Activated naive CD4-positive, alpha-beta T cell treated with anti-CD3 and anti-CD28 coated beads, Interleukin-2, amount 10 ng/mL, durations not matched to agents 7 days and 5 days (primary cell): ENCODE measurements at regions of chr17 and their contacts with region 1.

Region 1: DNA sequence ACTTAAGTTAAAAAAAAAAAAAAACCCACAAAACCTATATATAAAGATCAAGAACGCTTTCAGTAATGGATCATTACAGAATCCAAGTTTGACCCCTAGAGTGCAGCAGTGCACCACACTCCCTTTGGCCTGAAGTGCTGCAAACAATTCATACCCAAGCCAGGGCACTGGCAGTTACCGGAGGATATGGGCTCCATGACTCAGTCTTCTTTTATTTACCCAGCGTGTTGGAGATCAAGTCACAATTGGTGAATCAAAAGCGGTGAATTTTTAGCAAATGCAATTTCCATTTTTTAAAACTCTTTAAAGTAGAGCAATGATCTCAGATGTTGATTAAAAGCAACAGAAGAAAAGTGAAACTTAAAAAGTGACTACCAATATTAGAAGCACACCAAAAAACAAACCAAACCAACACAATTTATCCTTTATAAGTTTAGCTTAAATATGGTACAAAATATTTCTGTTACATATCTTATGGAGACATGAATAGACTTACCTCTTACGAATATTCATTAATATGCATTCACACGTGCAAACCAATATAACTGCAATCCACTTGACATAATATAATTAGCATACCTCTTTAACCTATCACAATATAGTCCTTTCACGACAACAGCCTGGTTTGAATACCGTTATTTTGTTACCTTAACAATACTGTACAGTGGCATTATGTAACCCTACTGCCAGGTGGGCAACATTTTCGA is 46.3 kb downstream of the ZNF652 start:
- DNase-seq: peak; percentile 87
- H3K4me3 Mint-ChIP-seq: peak overlapping the region; percentile 35
- H3K27ac Mint-ChIP-seq: peak overlapping the region; percentile 82
- H3K4me1 Mint-ChIP-seq: peaks cover 29% of the 10 kb centered on the region
- H3K27me3 Mint-ChIP-seq: no peaks in the 10 kb centered on the region

Region 2: GRCh38 chr17:49297141-49297540 is 18.6 kb before region 1 on chr17:
- CTCF ChIA-PET with region 1: no interaction called
- DNase-seq: no peak
- H3K4me3 Mint-ChIP-seq: no peak overlapping the region
- H3K27ac Mint-ChIP-seq: no peak overlapping the region
- H3K4me1 Mint-ChIP-seq: no peaks in the 10 kb centered on the region
- H3K27me3 Mint-ChIP-seq: no peaks in the 10 kb centered on the region

Region 3: GRCh38 chr17:49361902-49362722 is 46.4 kb after region 1 on chr17 and contains the start of gene ZNF652:
- CTCF ChIA-PET with region 1: interaction called, 104 read pairs
- DNase-seq: peak; percentile 97
- H3K4me3 Mint-ChIP-seq: peak within 1 kb of the TSS; percentile 94
- H3K27ac Mint-ChIP-seq: peak within 1 kb of the TSS; percentile 98
- H3K4me1 Mint-ChIP-seq: peaks cover 66% of the 10 kb centered on the region
- H3K27me3 Mint-ChIP-seq: peaks cover 3% of the 10 kb centered on the region

Region 4: GRCh38 chr17:49375544-49375943 is 59.8 kb after region 1 on chr17:
- CTCF ChIA-PET with region 1: interaction called, 104 read pairs
- DNase-seq: no peak
- H3K4me3 Mint-ChIP-seq: no peak overlapping the region
- H3K27ac Mint-ChIP-seq: no peak overlapping the region
- H3K4me1 Mint-ChIP-seq: peaks cover 8% of the 10 kb centered on the region
- H3K27me3 Mint-ChIP-seq: peaks cover 37% of the 10 kb centered on the region

Region 5: GRCh38 chr17:49390548-49391324 is 75.0 kb after region 1 on chr17:
- CTCF ChIA-PET with region 1: interaction called, 98 read pairs
- DNase-seq: peak; percentile 34
- H3K4me3 Mint-ChIP-seq: peak overlapping the region; percentile 25
- H3K27ac Mint-ChIP-seq: peak overlapping the region; percentile 90
- H3K4me1 Mint-ChIP-seq: peaks cover 73% of the 10 kb centered on the region
- H3K27me3 Mint-ChIP-seq: peaks cover 3% of the 10 kb centered on the region